ENCODE measurements at regions of chr11 and their contacts with region 1.

Region 1: GRCh38 chr11:10405855-10406592 is 49.0 kb upstream of the AMPD3 start:
- DNase-seq: peak; percentile 89
- H3K4me3 ChIP-seq: no peak overlapping the region
- H3K27ac ChIP-seq: no peak overlapping the region
- H3K4me1 ChIP-seq: peaks cover 26% of the 10 kb centered on the region
- H3K27me3 ChIP-seq: no peaks in the 10 kb centered on the region
- CTCF ChIP-seq: peak; percentile 56 to 73
- POLR2A ChIP-seq: no peak

Region 2: DNA sequence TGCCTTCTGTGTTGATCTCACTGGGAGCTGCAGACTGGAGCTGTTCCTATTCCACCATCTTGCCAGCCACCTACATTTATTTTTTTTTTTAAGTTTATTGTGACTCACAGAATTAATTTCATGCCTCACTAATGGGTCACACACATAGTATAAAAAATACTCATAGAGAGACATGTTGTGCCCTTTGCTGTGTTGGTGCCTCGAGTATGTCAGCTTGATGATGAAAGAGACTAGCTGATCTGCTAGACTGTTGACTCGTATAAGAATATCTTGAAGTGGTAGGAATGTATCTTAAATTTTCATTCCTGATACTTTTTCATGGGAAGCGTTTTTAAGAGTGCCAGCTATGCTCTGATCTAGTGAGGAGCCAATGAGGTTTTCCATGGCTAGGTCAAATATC is 20.5 kb after region 1 on chr11:
- CTCF ChIA-PET with region 1: interaction called, 18 read pairs
- POLR2A ChIA-PET with region 1: no interaction called
- dilution Hi-C with region 1: no loop called
- intact Hi-C with region 1: no loop called
- DNase-seq: no peak
- H3K4me3 ChIP-seq: no peak overlapping the region
- H3K27ac ChIP-seq: no peak overlapping the region
- H3K4me1 ChIP-seq: no peaks in the 10 kb centered on the region
- H3K27me3 ChIP-seq: peaks cover 6% of the 10 kb centered on the region in 2 experiments
- CTCF ChIP-seq: no peak
- POLR2A ChIP-seq: no peak

Region 3: DNA sequence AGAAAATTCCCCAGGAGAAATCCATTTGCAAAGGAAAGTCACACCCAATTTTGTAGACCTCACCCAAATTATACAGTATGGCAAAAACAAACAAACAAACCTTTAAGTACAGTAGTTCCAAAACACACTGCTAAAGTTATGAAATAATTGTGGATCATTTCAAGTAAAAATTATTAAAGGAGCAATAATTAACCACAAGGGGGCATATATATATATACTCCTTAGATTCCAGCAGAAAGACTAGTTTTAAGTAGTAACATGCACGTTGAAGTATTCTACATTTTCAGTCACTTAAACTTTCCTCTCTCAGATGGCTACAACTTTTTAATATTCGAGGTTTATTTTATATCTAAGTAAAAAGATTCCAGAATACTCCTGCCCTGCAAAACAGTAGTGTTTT is 108.2 kb after region 1 on chr11:
- CTCF ChIA-PET with region 1: interaction called, 45 read pairs
- POLR2A ChIA-PET with region 1: no interaction called
- dilution Hi-C with region 1: no loop called
- intact Hi-C with region 1: loop called (anchors 2 kb)
- DNase-seq: peak; percentile 52
- H3K4me3 ChIP-seq: no peak overlapping the region
- H3K27ac ChIP-seq: no peak overlapping the region
- H3K4me1 ChIP-seq: peaks cover 7% of the 10 kb centered on the region
- H3K27me3 ChIP-seq: no peaks in the 10 kb centered on the region
- CTCF ChIP-seq: peak; percentile 5 to 10
- POLR2A ChIP-seq: no peak

Region 4: DNA sequence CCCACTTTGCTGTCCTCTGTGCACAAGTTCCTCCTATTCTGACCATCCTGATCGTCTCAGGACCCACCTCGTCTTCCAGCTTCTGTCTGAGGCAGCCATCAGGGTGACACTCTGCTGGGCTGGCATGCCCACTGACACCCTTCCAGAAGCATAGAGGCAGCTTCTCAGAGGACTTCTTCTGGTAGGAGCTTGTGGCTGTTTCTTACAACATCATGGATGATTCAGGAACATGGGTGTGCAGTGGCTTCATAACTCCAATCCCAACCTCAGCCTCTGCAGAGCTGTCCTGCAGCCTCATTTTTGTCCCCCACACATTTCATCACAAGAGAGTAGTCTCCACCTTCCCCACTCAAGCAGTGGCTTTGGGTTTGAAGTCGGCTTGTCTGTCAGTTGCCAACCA is 324.1 kb after region 1 on chr11:
- CTCF ChIA-PET with region 1: interaction called, 39 read pairs
- POLR2A ChIA-PET with region 1: no interaction called
- dilution Hi-C with region 1: no loop called
- intact Hi-C with region 1: loop called (anchors 1 kb)
- DNase-seq: no peak
- H3K4me3 ChIP-seq: no peak overlapping the region
- H3K27ac ChIP-seq: no peak overlapping the region
- H3K4me1 ChIP-seq: no peaks in the 10 kb centered on the region
- H3K27me3 ChIP-seq: peaks cover 9 to 16% of the 10 kb centered on the region in 2 experiments
- CTCF ChIP-seq: no peak
- POLR2A ChIP-seq: no peak